GM10248 (cell line): ENCODE measurements at regions of chr17 and their contacts with region 1.

Region 1: DNA sequence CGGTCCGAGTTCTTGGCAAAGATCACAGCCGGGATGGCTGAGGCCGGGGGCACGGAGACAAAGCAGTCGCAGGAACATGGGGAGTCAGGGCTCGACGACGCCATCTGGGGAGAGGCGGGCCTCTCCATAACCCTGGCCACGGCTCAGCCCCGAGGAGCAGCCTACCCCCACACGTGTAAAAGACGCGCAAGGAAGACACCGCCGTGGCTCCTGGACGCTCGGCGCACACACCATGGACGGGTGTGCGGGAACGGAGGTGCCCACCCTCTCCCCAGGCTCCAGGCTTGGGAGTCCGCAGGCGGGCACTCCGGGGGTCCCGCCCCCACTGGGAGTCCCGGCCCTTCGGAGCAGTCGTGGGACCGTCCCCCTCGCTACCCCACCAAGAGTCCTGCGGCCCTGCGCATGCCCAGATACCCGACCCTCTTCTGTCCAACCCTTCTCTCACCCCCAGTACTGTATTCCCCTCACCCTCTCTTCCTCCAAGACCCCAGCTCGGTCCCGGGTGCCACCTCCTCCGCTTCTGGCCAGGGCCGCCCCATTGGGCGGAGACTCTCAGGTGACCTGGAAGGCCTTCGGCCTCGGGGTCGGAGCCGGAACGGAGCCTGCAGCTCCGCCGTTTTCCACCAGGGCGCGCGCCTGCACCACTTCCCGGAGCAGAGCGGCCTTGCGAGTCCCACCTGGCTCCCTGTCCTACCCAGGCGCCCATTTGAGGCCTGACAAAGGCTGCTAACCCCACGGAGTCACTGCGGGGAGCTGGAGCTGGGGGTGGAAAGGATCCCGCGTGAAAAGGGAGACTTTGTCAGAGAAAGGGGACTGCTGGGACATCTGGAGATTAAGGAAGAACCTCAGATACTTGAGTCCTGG is at the start of gene SCRN2:
- DNase-seq: peak; percentile 93
- CTCF ChIP-seq: peak; percentile 95

Region 2: GRCh38 chr17:47821424-47822391 is 19.3 kb before region 1 on chr17 and contains the start of gene OSBPL7:
- CTCF ChIA-PET with region 1: interaction called, 20 read pairs
- POLR2A ChIA-PET with region 1: no interaction called
- DNase-seq: peak; percentile 91
- CTCF ChIP-seq: peak; percentile 77

Region 3: DNA sequence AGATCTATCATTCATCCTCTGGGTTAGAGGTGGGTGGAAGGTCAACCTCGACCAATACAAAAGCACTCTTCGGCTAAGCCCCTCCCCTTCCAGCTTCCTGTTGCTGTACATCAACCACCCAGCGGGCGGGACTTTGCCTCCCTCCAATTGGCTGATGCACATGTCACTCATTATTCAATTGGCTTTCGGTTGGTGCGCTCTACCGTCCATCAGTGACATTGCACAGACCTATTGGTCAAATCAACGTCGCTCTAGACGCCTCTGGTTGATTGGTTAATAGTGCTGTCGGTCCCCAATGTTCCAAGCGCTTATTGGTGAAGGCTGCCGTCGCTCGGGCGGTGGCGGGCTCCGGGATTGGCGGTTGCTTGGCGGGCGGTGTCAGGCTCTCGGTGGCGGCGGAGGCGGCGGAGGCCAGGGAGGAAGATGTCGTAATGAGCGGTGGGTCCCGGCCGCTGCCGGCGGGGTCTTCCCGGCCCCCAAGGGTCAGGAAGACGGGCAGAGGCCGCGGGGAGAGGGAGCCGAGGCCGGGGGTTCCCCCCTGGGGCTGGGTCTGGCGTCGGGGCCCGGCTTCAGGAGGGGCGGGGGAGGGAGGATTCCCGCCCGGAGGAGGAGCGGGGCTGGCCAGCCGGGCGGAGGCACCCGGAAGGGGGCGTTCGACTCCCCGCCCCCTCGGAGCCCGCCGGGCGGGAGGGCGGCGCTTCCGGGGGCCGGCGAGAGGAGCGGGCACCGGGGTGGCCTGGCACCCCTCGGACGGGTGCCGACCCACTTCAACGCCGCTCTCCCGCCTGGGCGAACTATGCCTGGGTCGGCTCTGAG is 55.1 kb after region 1 on chr17 and contains the start of gene SP2:
- CTCF ChIA-PET with region 1: interaction called, 687 read pairs
- POLR2A ChIA-PET with region 1: no interaction called
- DNase-seq: peak; percentile 99
- CTCF ChIP-seq: no peak

Region 4: DNA sequence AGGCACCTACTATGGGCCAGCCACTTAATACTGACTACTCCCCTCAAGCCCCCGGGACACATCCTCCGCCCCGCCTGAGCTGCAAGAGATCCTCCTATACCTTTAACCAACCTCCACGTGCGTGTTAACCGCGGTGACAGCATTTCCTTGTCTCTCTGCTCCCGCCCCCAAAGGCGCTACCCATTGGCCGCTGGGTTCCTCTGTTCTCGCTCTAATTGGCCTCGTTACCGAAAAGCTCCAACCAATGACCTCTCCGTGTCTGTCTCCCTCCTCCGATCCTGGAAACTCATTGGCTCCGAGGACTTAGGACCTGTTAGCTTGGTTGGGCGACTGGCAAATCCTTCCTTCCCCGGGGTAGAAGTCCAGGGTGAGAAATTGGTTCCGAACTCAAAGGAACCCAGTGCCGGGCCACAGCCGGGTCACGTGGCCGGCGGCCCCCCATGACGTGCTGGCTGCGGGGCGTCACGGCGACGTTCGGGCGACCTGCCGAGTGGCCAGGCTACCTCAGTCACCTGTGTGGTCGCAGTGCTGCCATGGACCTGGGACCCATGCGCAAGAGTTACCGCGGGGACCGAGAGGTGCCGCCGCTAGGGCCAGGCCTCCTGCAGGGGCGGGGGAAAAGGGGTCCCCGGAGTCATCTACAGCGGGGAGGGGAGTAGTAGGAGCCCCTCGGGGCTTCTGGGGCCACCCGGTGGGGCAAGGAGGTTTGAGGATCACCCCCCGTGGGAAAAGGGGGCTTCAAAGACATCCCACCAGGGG is 100.4 kb after region 1 on chr17 and contains the start of gene PNPO:
- CTCF ChIA-PET with region 1: interaction called, 14 read pairs
- POLR2A ChIA-PET with region 1: no interaction called
- DNase-seq: peak; percentile 96
- CTCF ChIP-seq: no peak

Region 5: GRCh38 chr17:47970704-47971463 is 129.9 kb after region 1 on chr17 and contains the start of gene CDK5RAP3:
- CTCF ChIA-PET with region 1: interaction called, 49 read pairs
- POLR2A ChIA-PET with region 1: no interaction called
- DNase-seq: peak; percentile 99
- CTCF ChIP-seq: peak; percentile 86

Region 6: GRCh38 chr17:48181653-48182052 is 340.7 kb after region 1 on chr17:
- CTCF ChIA-PET with region 1: no interaction called
- POLR2A ChIA-PET with region 1: no interaction called
- DNase-seq: no peak
- CTCF ChIP-seq: peak; percentile 23